ENCODE measurements at regions of chr3 and their contacts with region 1.

Region 1: DNA sequence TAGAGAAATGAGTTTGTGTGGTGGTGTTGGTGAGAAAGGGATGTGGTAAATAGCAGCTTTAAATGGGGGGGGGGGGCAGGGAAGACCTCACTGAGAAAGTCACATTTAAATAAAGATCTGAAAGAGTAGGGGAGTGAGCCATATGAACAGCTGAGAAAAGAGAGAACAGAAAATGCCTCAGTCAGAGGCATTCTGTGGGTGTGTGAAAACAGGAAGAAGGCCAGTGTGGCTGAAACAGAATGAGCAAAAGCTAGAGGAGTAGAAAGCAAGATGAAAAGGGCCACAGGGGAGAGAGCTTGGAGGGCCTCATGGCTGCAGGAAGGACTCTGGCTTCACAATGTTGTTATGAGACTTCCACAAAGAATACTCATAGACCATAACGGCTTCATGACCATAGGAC is 783.3 kb downstream of the ZPLD1 start:
- DNase-seq: peak; percentile 83
- ATAC-seq: peak; percentile 99
- H3K4me3 ChIP-seq: no peak overlapping the region
- H3K27ac ChIP-seq: no peak overlapping the region
- H3K4me1 ChIP-seq: peaks cover 3% of the 10 kb centered on the region; the same call in 1 of the 2 replicates
- H3K27me3 ChIP-seq: no peaks in the 10 kb centered on the region
- CTCF ChIP-seq: no peak
- EP300 ChIP-seq: peak; percentile 79 to 85
- POLR2A ChIP-seq: no peak
- RAD21 ChIP-seq: no peak

Region 2: GRCh38 chr3:103085465-103085864 is 132.7 kb before region 1 on chr3:
- CTCF ChIA-PET with region 1: no interaction called
- POLR2A ChIA-PET with region 1: no interaction called
- RAD21 ChIA-PET with region 1: no interaction called
- SMC1A ChIA-PET with region 1: no interaction called
- in situ Hi-C with region 1: no loop called
- intact Hi-C with region 1: loop called (anchors 5 kb)
- DNase-seq: peak; percentile 7
- ATAC-seq: peak; percentile 74
- H3K4me3 ChIP-seq: no peak overlapping the region
- H3K27ac ChIP-seq: no peak overlapping the region
- H3K4me1 ChIP-seq: no peaks in the 10 kb centered on the region
- H3K27me3 ChIP-seq: no peaks in the 10 kb centered on the region
- CTCF ChIP-seq: no peak
- EP300 ChIP-seq: no peak
- POLR2A ChIP-seq: no peak
- RAD21 ChIP-seq: no peak

Region 3: GRCh38 chr3:103127737-103128136 is 90.4 kb before region 1 on chr3:
- CTCF ChIA-PET with region 1: no interaction called
- POLR2A ChIA-PET with region 1: no interaction called
- RAD21 ChIA-PET with region 1: no interaction called
- SMC1A ChIA-PET with region 1: interaction called, 3 read pairs
- in situ Hi-C with region 1: no loop called
- intact Hi-C with region 1: loop called (anchors 5 kb)
- DNase-seq: peak; percentile 13
- ATAC-seq: peak; percentile 88
- H3K4me3 ChIP-seq: no peak overlapping the region
- H3K27ac ChIP-seq: no peak overlapping the region
- H3K4me1 ChIP-seq: no peaks in the 10 kb centered on the region
- H3K27me3 ChIP-seq: no peaks in the 10 kb centered on the region
- CTCF ChIP-seq: no peak
- EP300 ChIP-seq: peak in 1 of 2 experiments; percentile 42; a peak in 1 of 4 replicates
- POLR2A ChIP-seq: no peak
- RAD21 ChIP-seq: no peak

Region 4: DNA sequence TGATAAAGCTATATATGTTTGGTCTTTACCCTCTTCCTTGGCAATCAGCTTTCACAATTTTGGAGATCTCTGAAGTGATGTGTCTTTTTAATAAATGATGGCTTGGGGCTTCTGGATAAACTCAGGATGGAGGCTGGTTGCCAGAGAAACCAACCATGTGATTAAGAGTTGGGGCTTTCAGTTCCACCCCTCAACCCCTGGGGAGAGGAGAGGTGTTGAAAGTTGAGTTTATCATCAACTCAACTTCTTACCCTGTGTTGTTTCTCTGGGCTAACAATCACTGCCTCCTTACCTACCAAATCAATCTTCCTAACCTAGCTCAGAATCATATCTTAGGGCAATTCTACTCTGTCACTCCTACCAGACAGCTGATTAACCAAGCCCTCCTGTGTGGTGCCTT is 47.5 kb before region 1 on chr3:
- CTCF ChIA-PET with region 1: no interaction called
- POLR2A ChIA-PET with region 1: no interaction called
- RAD21 ChIA-PET with region 1: interaction called, 4 read pairs
- SMC1A ChIA-PET with region 1: interaction called, 6 read pairs
- in situ Hi-C with region 1: no loop called
- intact Hi-C with region 1: loop called (anchors 5 kb)
- DNase-seq: no peak
- ATAC-seq: peak; percentile 78
- H3K4me3 ChIP-seq: no peak overlapping the region
- H3K27ac ChIP-seq: no peak overlapping the region
- H3K4me1 ChIP-seq: no peaks in the 10 kb centered on the region
- H3K27me3 ChIP-seq: no peaks in the 10 kb centered on the region
- CTCF ChIP-seq: no peak
- EP300 ChIP-seq: peak in 1 of 2 experiments; percentile 38; a peak in 1 of 4 replicates
- POLR2A ChIP-seq: no peak
- RAD21 ChIP-seq: no peak